ENCODE measurements at regions of chr14 and their contacts with region 1.

Region 1: DNA sequence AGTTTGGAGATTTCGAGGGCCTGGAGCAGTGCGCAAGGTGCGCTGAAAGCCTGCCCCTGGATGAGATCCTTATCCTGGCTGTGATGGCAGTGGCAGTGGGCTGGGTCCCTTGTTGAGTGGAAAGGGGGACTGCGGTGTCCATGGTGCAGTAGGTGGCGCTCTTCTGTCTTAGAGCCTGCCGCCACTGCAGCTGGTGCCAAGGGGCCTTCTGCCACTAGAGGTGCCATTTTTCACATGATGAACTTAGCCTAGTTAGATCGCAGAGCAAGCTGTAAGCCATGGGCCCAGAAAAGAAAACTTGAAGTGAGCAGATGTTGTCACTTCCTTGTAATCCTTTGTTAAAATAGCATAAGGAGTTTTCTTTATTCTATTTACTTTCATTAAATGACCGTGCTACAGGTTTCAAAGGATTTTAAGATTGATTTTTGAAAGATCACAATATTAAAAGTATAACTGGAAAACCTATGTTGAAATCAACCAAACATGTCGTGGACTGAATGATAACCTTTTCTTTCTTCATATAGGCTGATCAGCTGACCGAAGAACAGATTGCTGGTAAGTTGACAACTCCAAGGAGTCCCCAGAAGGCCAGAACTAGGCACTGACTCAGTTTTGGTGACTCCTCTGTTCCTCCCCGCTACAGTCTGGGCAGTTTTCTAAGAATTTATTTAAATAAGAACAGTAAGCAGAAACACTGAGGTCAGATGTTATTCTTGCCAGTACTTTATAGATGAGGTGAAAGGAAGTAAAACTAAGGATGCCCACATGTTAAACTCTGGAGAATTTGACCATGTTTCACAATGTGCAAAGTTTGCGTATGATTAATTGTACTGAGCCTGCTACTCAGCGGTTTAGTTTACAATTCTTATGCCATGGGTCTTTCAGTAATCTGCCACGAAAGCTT is 3.0 kb downstream of the CALM1 start:
- DNase-seq: no peak
- H3K4me3 ChIP-seq: peak overlapping the region; percentile 85 to 99
- H3K27ac ChIP-seq: peak overlapping the region; percentile 90
- H3K4me1 ChIP-seq: peaks cover 44% of the 10 kb centered on the region
- H3K27me3 ChIP-seq: no peaks in the 10 kb centered on the region
- CTCF ChIP-seq: peak; percentile 92 to 99 (median 96)
- POLR2A ChIP-seq: no peak

Region 2: DNA sequence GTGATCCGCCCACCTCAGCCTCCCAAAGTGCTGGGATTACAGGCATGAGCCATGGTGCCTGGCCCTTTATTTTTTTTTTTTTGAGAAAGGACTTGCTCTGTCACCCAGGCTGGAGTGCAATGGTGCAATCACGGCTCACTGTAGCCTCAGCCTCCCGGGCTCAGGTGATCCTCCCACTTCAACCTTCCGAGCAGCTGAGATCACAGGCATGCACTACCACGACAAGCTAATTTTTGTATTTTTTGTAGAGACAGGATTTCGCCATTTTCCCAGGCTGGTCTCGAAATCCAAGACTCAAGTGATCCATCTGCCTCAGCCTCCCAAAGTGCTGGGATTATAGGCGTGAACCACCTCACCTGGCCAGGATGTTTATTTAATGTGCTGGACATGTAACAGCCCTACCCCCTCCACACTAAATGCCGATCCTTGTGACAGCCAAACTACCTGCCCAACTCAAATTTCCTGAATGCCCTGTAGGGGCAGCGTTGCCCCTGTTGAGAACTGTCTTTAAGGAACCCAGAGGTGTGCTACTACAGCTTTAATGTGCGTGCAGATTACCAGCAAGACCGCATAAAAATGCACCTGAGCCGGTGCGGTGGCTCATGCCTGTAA is 290.0 kb before region 1 on chr14:
- intact Hi-C with region 1: no loop called
- DNase-seq: no peak
- H3K4me3 ChIP-seq: no peak overlapping the region
- H3K27ac ChIP-seq: no peak overlapping the region
- H3K4me1 ChIP-seq: no peaks in the 10 kb centered on the region
- H3K27me3 ChIP-seq: no peaks in the 10 kb centered on the region
- CTCF ChIP-seq: no peak
- POLR2A ChIP-seq: no peak

Region 3: DNA sequence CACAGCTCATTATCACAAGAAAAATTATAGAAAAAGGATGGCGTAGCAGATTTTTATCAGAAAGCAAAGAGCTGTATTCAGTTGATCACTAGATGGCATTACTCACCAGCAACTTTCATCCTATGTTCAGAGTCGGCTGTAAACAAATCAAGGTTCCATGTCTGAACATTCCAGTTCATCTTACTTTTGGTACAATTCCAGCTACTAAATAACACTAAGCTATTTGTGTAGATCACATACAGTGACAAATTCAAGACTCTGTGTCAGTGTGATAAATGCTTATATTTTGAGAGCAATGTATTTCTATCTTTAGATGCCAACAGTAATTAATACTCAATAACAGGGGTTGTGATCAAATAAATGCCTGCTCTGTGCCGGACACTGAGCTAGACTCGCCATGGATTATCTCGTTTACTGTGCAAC is 98.1 kb before region 1 on chr14:
- intact Hi-C with region 1: no loop called
- DNase-seq: no peak
- H3K4me3 ChIP-seq: no peak overlapping the region
- H3K27ac ChIP-seq: peak overlapping the region; percentile 10
- H3K4me1 ChIP-seq: peaks cover 7% of the 10 kb centered on the region
- H3K27me3 ChIP-seq: no peaks in the 10 kb centered on the region
- CTCF ChIP-seq: no peak
- POLR2A ChIP-seq: no peak

Region 4: DNA sequence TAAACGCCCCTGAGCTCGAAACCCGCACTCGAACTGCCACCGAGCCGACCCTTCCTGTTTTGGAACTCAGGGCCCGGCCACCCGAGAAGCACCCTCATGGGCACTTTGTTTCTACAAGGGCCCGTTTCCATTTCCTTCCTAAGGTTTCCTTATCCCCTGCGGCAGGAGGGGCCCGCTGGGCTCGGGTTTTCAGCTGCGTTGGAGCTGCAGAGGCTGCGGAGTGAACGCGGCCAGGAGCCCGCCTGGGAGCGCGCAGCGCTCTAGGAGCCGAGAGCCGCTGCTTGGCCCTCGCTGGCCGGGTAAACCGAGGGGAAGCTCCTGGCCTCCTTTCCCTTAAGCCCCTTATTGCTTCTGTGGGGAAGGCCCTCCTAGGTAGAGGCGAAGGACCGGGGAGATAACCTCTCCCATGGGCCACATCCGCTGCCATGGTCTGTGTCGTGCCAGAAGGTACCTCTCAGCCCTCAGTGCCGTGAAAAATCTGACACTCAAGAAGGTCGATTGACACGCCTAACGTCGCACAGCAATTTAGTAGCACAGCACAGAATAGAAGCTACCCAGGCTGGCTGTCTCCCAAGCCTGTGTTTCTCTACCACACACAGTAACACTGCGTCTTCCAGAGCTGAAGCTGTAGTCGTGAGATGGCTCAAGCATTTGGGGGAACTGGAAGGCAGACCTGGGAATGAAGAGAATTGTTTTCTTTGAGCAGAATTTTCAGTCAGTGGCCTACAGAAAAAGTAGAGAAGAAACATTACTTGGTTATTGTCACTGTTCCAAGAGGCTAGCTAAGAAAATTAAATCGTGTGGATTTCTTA is 15.9 kb before region 1 on chr14:
- intact Hi-C with region 1: loop called (anchors 1 kb)
- DNase-seq: peak in 1 of 2 donors; percentile 91
- H3K4me3 ChIP-seq: peak overlapping the region; percentile 59 to 67
- H3K27ac ChIP-seq: peak overlapping the region; percentile 99
- H3K4me1 ChIP-seq: peaks cover 26% of the 10 kb centered on the region
- H3K27me3 ChIP-seq: no peaks in the 10 kb centered on the region
- CTCF ChIP-seq: no peak
- POLR2A ChIP-seq: no peak

Region 5: GRCh38 chr14:90518941-90519256 is 119.1 kb after region 1 on chr14:
- intact Hi-C with region 1: loop called (anchors 10 kb)
- DNase-seq: no peak
- H3K4me3 ChIP-seq: no peak overlapping the region
- H3K27ac ChIP-seq: no peak overlapping the region
- H3K4me1 ChIP-seq: peaks cover 33% of the 10 kb centered on the region
- H3K27me3 ChIP-seq: no peaks in the 10 kb centered on the region
- CTCF ChIP-seq: peak in 2 of 3 experiments; percentile 1 to 33
- POLR2A ChIP-seq: no peak

Region 6: DNA sequence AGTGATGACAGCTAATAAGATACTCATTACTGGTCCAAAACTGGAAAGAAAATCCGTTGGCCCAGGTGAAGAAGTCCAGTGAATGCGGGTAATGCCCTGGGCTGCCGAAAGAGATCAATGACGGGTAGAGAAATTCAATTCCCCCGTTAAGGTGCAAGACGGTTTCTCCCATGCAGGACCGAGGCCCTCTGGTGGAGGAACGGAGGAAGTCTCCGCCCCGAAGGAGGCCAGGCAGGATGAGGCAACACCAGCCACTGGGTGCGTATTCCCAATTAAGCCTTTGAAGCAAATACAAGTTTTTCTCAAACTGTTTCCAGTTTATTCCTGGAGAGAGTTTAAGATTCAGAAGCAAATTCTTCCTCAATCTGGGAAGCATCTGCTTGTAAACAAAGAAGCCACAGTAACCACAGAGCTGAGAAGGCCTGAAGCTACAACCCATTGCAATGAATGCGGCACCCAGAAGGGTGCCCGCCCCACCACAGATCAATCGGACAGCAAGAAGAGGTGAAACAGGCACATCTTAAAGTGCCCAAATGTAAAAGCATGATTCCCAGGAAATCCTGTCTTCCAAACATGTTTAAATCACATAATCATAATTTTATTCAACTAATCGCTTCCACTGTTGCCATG is 297.9 kb after region 1 on chr14:
- intact Hi-C with region 1: loop called (anchors 2 kb)
- DNase-seq: no peak
- H3K4me3 ChIP-seq: no peak overlapping the region
- H3K27ac ChIP-seq: peak overlapping the region; percentile 30
- H3K4me1 ChIP-seq: peaks cover 32% of the 10 kb centered on the region
- H3K27me3 ChIP-seq: no peaks in the 10 kb centered on the region
- CTCF ChIP-seq: peak; percentile 60 to 91 (median 87)
- POLR2A ChIP-seq: no peak

Region 7: DNA sequence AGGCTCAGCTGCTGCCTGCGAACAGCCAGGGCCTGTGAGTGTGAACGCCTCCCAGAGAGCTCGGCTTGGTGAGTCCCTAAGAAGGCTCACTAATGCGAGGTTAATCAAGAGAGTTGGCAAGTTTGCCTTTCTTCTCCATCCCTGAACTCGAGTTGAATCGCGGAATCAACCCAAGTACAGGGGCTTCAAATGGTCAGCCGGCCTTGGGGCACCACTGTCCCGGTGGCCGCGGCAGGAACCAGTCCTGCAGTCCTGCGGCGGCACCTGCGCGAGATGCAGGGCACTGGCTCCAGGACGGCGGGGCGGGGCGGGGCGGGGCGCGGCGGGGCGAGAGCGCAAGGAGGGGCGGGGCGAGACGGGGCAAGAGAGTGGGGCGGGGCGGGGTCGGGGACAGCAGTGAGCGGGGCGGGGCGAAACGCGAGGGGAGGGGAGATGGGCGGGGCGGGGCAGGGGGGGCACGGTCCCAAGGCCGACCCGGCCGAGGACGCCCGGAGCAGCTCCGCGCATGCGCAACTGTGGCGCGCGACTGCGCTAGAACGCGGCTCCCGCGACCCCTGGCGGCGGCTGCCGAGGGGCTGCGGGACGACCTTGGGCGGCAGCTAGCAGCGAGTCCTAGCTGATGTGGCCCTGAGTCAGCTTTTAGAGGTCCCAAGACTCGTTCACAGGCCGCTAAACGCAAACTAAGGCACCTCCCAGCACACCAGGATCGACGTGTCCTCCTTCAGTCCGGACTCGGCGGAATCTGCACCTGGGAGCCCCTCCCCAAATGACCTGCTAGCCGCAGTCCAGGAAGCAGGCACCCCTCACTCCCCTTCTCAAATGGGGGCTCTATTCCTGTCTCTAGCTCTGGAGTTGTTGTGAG is 358.5 kb after region 1 on chr14:
- intact Hi-C with region 1: loop called (anchors 10 kb)
- DNase-seq: peak in 1 of 2 donors; percentile 91
- H3K4me3 ChIP-seq: peak overlapping the region; percentile 45 to 65
- H3K27ac ChIP-seq: peak overlapping the region; percentile 88
- H3K4me1 ChIP-seq: peaks cover 13% of the 10 kb centered on the region
- H3K27me3 ChIP-seq: no peaks in the 10 kb centered on the region
- CTCF ChIP-seq: peak; percentile 82 to 99 (median 84)
- POLR2A ChIP-seq: no peak

Region 8: DNA sequence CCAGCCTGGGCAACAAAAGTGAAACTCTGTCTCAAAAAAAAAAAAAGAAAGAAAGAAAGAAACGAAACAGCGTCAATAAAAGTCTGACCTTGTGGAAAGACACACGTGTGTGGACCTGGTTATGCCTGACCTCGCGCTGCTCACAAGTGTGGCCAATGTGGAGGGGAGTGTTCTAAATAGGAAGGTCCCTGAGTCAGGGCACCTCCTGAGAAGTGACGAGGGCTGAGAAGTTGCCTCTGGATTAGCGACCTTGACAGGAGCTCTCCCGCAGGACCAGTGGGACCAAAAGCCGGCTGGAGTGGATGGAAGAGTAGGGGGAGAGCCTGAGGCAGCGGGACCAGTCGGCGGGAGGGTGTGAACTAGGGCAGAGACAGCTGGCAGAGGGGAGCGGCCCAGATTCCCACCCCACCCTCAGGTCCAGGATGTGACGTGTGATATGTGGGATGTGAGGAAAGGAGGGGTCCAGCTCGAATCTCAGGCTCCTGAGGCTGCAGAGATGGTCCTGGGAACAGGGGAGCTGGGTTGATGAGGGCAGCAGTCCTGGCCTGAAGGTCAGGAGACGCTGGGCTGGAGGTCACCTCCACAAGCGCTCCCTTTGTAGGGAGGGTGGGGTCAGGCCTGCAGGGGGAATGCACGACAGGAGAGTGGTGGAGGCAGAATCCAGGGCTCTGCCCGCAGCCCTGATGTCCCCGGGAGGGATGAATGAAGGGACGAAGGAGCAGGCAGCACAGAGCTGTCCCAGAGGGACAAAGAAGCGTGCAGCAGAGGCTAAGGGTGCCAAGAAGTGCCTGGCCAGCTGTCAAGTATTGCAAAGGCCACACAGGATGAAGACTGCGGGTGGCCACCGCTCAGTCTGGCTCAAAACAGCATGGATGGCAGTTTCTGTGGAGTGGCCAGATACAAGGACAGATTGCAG is 869.5 kb after region 1 on chr14:
- intact Hi-C with region 1: no loop called
- DNase-seq: no peak
- H3K4me3 ChIP-seq: peak overlapping the region in 1 of 2 donors; percentile 9
- H3K27ac ChIP-seq: no peak overlapping the region
- H3K4me1 ChIP-seq: peaks cover 23% of the 10 kb centered on the region
- H3K27me3 ChIP-seq: no peaks in the 10 kb centered on the region
- CTCF ChIP-seq: no peak
- POLR2A ChIP-seq: no peak